ENCODE measurements at regions of chr1 and their contacts with region 1.

Region 1: GRCh38 chr1:207052911-207053769 is at the start of gene PFKFB2:
- DNase-seq: peak; percentile 98
- ATAC-seq: peak; percentile 92
- total RNA-seq, gene PFKFB2: 68.2 TPM

Region 2: DNA sequence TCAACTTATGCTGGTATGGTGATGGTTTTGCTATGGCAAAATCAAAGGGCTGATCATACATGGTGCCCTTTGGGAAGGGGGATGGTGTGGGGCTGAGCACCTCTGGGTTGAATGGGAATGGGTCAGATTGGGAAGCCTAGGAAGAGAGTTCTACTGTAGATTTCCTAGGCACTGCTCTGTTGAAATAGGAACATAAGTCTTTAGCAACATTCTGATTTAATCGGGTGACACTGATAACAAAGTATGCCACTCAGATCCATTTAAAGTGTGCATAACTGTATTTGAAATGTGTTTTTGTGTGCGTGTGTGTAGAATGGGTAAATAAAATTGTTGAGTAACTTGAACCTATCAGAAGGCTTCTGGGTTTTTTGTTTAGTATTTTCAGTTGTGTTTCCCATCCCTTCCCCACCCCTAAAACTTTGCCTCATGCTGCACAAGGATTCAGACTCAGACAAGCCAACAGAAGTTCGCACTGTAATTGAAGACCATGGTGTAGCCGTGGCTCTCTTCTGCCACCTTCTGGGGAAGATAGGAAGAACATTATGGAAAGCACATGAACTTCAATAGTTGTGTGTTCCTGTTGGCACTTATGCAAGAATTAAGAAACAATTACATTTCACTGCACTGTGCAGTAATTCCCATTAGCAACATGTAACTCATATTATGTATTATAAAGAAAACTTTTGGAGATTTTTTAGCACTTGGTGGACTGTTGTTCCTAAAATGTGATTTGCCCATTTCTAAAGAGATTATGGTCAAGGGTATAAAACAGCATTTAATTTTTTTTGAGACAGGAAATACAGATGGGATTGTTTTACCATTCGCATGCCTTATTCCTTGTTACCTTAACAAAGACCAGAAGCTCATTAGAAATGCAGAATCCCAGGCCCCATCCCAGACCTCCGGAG is 24.6 kb after region 1 on chr1:
- intact Hi-C with region 1: loop called (anchors 1 kb)
- DNase-seq: no peak
- ATAC-seq: peak; percentile 81

Region 3: GRCh38 chr1:207309775-207310273 is 256.7 kb after region 1 on chr1:
- intact Hi-C with region 1: loop called (anchors 10 kb)
- DNase-seq: no peak
- ATAC-seq: peak; percentile 81

Measured in Right ventricle myocardium inferior (tissue), 1 donor.